Lower lobe of right lung (tissue), 2 donors: ENCODE measurements at regions of chr20 and their contacts with region 1.

Region 1: DNA sequence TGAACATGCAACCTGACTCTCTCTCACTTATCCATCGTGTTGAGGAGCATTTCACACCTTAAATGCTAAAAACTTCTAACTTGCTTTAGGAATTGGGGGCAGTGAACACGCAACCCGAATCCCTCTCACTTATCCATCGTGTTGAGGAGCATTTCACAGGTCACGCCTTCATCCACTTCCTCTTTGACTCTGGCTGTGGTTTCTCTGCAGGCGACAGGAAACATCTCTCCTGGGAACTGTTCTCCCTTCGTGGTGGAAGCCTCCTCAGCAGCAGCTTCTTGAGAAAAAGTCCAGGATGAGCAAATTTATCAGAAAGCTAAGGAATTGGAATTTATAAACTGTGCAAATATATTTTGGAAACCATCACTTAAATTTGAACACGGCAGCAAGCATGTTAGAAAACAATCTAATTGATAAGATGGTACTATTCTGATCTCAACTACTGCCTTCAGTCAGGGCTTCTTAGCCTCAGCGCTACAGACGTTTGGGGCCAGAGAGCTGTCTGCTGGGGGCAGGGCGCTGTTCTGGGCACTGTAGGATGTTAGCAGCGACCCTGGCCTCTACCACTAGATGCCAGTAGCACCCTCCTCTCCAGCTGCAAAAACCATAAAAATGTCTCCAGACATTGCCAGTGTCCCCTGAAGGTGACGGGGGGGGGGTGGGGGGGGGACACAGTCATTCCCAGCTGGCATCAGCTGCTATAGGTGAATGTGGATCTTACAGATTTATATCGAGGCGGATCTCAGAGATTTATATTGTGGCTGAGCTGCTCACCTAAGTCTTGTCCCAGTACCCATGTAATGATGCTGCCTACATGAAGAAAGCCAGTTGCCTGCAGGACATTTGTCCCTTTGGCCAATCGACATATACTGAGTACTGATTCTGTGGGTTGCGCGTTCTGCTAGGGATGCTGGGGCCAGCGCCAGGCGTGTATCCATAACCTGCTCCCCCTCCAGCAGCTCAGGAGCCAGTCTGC is 26.2 kb downstream of the CTCFL start:
- DNase-seq: no peak
- ATAC-seq: peak in 1 of 2 donors; percentile 53
- H3K4me3 ChIP-seq: no peak overlapping the region
- H3K27ac ChIP-seq: no peak overlapping the region
- H3K4me1 ChIP-seq: peaks cover 31% of the 10 kb centered on the region
- H3K27me3 ChIP-seq: peaks cover 12% of the 10 kb centered on the region
- CTCF ChIP-seq: peak; percentile 25

Region 2: GRCh38 chr20:57383447-57384347 is 115.0 kb before region 1 on chr20:
- intact Hi-C with region 1: loop called (anchors 5 kb)
- DNase-seq: no peak
- ATAC-seq: no peak
- H3K4me3 ChIP-seq: no peak overlapping the region
- H3K27ac ChIP-seq: no peak overlapping the region
- H3K4me1 ChIP-seq: peaks cover 14% of the 10 kb centered on the region
- H3K27me3 ChIP-seq: no peaks in the 10 kb centered on the region
- CTCF ChIP-seq: no peak

Region 3: GRCh38 chr20:58192567-58192966 is 693.9 kb after region 1 on chr20:
- intact Hi-C with region 1: no loop called
- DNase-seq: no peak
- ATAC-seq: peak in 1 of 2 donors; percentile 32
- H3K4me3 ChIP-seq: no peak overlapping the region
- H3K27ac ChIP-seq: no peak overlapping the region
- H3K4me1 ChIP-seq: no peaks in the 10 kb centered on the region
- H3K27me3 ChIP-seq: peaks cover 24% of the 10 kb centered on the region
- CTCF ChIP-seq: peak; percentile 65